Panc1 (cell line): ENCODE measurements at regions of chr1 and their contacts with region 1.

Region 1: GRCh38 chr1:228279011-228279721 is 71.3 kb downstream of the OBSCN start:
- DNase-seq: no peak
- ATAC-seq: no peak
- H3K4me3 ChIP-seq: no peak overlapping the region
- H3K27ac ChIP-seq: no peak overlapping the region
- H3K4me1 ChIP-seq: no peaks in the 10 kb centered on the region
- H3K27me3 ChIP-seq: no peaks in the 10 kb centered on the region
- CTCF ChIP-seq: no peak

Region 2: DNA sequence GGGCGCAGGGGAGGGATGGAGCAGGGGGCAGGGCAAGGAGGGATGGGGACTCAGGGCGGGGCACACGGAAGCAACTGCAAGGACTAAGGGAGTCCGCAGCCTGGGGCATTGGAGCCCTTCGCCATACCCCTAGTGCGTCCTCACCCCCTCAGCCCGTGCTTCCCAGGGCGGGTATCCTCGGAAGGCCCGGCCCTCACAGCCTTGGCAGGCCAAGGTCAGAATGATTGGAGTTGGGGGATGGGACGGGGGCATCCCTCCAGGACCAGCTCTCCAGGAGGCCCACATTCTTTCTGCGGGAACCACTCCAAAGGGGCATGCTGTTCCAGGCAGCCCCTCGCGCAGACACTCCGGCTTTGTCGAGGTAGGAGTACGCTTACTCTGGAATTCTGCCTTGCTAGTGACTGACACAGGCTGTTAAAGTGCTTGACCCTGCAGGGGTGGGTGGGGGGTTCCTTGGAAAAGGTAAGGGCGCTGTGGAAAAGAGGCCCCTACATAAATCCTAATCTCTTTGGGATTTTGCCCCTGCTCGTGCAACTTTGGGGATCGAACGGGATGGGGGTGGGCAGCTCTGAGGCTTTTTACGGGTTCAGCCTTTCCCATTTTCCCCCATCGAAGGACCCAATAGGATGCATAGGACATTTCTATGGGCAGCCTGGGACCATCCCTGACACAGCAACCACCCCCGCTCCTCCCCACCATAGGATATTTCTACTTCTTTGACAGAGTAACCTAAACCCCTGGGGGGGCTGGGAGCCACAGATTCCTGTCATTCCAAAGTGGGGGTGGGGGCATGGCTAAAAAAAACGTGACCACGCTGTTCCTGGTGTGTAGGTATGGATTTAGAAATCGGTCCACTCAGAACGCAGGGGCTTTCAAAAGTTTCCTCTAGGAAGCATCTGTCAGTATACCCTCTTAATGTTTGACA is 128.2 kb after region 1 on chr1:
- CTCF ChIA-PET with region 1: no interaction called
- POLR2A ChIA-PET with region 1: interaction called, 17 read pairs
- in situ Hi-C with region 1: no loop called
- intact Hi-C with region 1: no loop called
- DNase-seq: no peak
- ATAC-seq: peak; percentile 74
- H3K4me3 ChIP-seq: peak overlapping the region; percentile 89 to 90
- H3K27ac ChIP-seq: peak overlapping the region; percentile 91
- H3K4me1 ChIP-seq: peaks cover 20% of the 10 kb centered on the region
- H3K27me3 ChIP-seq: no peaks in the 10 kb centered on the region
- CTCF ChIP-seq: no peak